ENCODE measurements at regions of chr17 and their contacts with region 1.

Region 1: GRCh38 chr17:43940630-43941029 is 1.6 kb downstream of the PPY start:
- DNase-seq: no peak
- ATAC-seq: no peak
- H3K4me3 ChIP-seq: no peak overlapping the region
- H3K4me3 Mint-ChIP-seq: no peak overlapping the region
- H3K27ac ChIP-seq: no peak overlapping the region
- H3K27ac Mint-ChIP-seq: no peak overlapping the region
- H3K4me1 ChIP-seq: peaks cover 10 to 11% of the 10 kb centered on the region in 2 donors
- H3K4me1 Mint-ChIP-seq: peaks cover 11% of the 10 kb centered on the region
- H3K27me3 ChIP-seq: peaks cover 0 to 32% (median 7%) of the 10 kb centered on the region in 4 experiments
- H3K27me3 Mint-ChIP-seq: peaks cover 33% of the 10 kb centered on the region
- CTCF ChIP-seq: peak; percentile 31

Region 2: DNA sequence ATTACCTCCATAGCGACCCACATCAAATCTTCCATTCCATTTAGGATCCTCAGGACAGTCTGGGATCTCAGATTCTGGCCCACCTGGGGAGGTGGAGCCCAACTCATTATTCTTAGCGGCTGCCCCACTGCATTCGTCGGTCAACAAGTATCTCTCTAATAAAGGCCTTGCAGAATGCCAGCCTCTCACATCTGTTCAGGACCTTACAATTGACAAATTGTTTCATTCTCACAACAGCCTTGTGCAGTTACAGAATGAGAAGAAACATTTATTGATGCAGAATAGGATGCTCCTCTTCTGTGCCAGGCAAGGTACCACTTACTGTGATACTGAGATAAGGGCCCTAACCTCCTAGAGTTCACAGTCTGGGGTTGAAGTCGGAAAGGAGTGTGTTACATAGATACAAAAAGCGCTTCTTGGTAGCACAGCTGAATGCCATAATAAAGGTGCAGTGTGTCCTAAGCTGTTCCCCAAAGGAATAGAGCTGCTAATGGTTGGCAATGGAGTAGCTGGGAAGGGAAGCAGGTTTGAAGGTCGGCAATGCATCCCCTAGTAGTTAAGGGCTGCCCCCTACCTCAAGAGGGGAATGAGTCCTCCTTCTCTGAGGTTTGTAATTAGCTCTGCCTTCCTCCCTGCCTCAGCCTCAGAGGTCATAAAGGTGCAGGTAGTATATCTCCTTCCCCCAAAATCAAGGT is 30.9 kb before region 1 on chr17:
- CTCF ChIA-PET with region 1: interaction called, 16 read pairs
- POLR2A ChIA-PET with region 1: no interaction called
- intact Hi-C with region 1: no loop called
- DNase-seq: no peak
- ATAC-seq: no peak
- H3K4me3 ChIP-seq: no peak overlapping the region
- H3K4me3 Mint-ChIP-seq: no peak overlapping the region
- H3K27ac ChIP-seq: no peak overlapping the region
- H3K27ac Mint-ChIP-seq: peak overlapping the region; percentile 26
- H3K4me1 ChIP-seq: peaks cover 27 to 32% of the 10 kb centered on the region in 2 donors
- H3K4me1 Mint-ChIP-seq: peaks cover 26% of the 10 kb centered on the region
- H3K27me3 ChIP-seq: peaks cover 0 to 46% (median 27%) of the 10 kb centered on the region in 4 experiments
- H3K27me3 Mint-ChIP-seq: peaks cover 35% of the 10 kb centered on the region
- CTCF ChIP-seq: no peak

Region 3: GRCh38 chr17:43994272-43995149 is 53.9 kb after region 1 on chr17:
- CTCF ChIA-PET with region 1: interaction called, 13 read pairs
- POLR2A ChIA-PET with region 1: no interaction called
- intact Hi-C with region 1: loop called (anchors 1 kb)
- DNase-seq: peak; percentile 71
- ATAC-seq: peak; percentile 83
- H3K4me3 ChIP-seq: peak overlapping the region in 1 of 5 experiments; percentile 12
- H3K4me3 Mint-ChIP-seq: no peak overlapping the region
- H3K27ac ChIP-seq: no peak overlapping the region
- H3K27ac Mint-ChIP-seq: no peak overlapping the region
- H3K4me1 ChIP-seq: peaks cover 8 to 9% of the 10 kb centered on the region in 2 donors
- H3K4me1 Mint-ChIP-seq: peaks cover 3% of the 10 kb centered on the region
- H3K27me3 ChIP-seq: peaks cover 0 to 22% (median 7%) of the 10 kb centered on the region in 4 experiments
- H3K27me3 Mint-ChIP-seq: peaks cover 29% of the 10 kb centered on the region
- CTCF ChIP-seq: peak; percentile 83

Region 4: DNA sequence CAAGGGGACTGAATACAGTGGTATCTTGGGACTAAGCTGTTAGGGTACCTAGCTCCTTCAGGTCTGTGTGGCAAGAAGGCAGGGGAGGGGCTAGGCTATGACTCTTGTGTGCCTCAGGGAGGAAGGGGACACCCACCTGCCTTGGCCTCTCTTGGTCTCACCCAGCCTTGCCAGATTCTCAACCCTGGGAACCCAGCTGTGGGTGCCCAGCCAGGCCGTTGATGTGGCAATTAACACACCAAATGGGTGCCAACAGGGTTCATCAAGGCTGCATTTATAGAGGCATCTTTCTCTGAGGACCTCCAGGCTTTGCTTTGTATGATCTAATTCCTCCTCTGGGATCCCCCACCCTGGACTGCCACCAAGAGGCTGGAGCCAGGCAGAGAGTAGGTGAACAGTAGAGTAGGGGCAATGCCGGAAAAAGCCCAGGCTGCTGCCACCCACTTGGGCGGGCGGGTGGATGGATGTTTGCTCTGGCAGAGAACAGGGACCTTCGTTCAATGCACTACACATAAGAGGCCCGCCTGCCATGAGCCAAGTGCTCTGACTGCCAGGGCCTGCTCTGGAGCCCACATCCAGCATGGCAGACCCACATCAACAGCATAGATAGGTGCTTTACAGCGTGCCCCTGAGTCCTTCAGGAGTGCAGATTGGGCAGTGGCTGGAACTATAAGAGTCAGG is 226.7 kb after region 1 on chr17:
- CTCF ChIA-PET with region 1: interaction called, 34 read pairs
- POLR2A ChIA-PET with region 1: no interaction called
- intact Hi-C with region 1: no loop called
- DNase-seq: no peak
- ATAC-seq: no peak
- H3K4me3 ChIP-seq: no peak overlapping the region
- H3K4me3 Mint-ChIP-seq: no peak overlapping the region
- H3K27ac ChIP-seq: no peak overlapping the region
- H3K27ac Mint-ChIP-seq: no peak overlapping the region
- H3K4me1 ChIP-seq: peaks cover 0 to 13% of the 10 kb centered on the region in 2 donors
- H3K4me1 Mint-ChIP-seq: peaks cover 9% of the 10 kb centered on the region
- H3K27me3 ChIP-seq: no peaks in the 10 kb centered on the region
- H3K27me3 Mint-ChIP-seq: no peaks in the 10 kb centered on the region
- CTCF ChIP-seq: no peak

Region 5: GRCh38 chr17:44350733-44351226 is 410.1 kb after region 1 on chr17:
- CTCF ChIA-PET with region 1: interaction called, 5 read pairs
- POLR2A ChIA-PET with region 1: no interaction called
- intact Hi-C with region 1: loop called (anchors 5 kb)
- DNase-seq: peak; percentile 83
- ATAC-seq: peak; percentile 41
- H3K4me3 ChIP-seq: no peak overlapping the region
- H3K4me3 Mint-ChIP-seq: peak overlapping the region; percentile 35
- H3K27ac ChIP-seq: no peak overlapping the region
- H3K27ac Mint-ChIP-seq: peak overlapping the region; percentile 58
- H3K4me1 ChIP-seq: peaks cover 40 to 46% of the 10 kb centered on the region in 2 donors
- H3K4me1 Mint-ChIP-seq: peaks cover 38% of the 10 kb centered on the region
- H3K27me3 ChIP-seq: no peaks in the 10 kb centered on the region
- H3K27me3 Mint-ChIP-seq: no peaks in the 10 kb centered on the region
- CTCF ChIP-seq: peak; percentile 85

Measured in B cell (primary cell).